ENCODE measurements at regions of chr16 and their contacts with region 1.

Region 1: GRCh38 chr16:71412270-71413160 is 29.3 kb downstream of the TLE7 start:
- DNase-seq: peak; percentile 46 to 60
- ATAC-seq: peak; percentile 50 to 78 (median 69)
- H3K4me3 ChIP-seq: no peak overlapping the region
- H3K27ac ChIP-seq: no peak overlapping the region
- H3K4me1 ChIP-seq: no peaks in the 10 kb centered on the region
- H3K27me3 ChIP-seq: peaks cover 0 to 7% (median 0%) of the 10 kb centered on the region in 3 donors
- CTCF ChIP-seq: peak; percentile 85

Region 2: DNA sequence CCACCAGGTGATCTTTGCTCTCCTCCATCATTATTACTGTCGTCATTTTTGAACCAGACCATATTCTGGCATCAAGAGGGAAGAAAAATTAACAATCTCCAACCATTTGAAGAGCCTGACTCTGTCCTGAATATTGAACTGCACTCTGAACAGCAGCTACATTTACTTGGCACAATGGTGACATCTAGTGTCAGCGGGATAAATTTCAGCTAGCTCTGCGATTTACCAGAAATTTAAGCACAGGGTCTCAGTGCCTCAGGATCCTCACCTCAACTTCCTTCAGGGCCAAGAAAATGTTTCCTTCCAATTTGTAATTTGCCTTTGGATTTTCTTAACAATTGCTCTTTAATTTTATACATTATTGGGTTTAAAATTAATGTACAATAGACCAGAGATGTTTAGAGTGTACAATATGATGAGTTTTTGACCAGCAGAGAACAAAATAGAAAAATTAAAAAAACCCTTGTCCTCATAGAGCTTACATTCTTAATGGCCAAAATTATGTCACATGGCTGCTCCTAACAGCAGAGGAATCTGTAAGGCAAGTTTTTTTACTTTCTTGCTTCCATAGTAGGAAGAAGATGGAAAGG is 87.4 kb after region 1 on chr16:
- intact Hi-C with region 1: loop called (anchors 2 kb)
- DNase-seq: no peak
- ATAC-seq: peak in 2 of 4 donors; percentile 56 to 67
- H3K4me3 ChIP-seq: no peak overlapping the region
- H3K27ac ChIP-seq: no peak overlapping the region
- H3K4me1 ChIP-seq: no peaks in the 10 kb centered on the region
- H3K27me3 ChIP-seq: peaks cover 0 to 2% (median 0%) of the 10 kb centered on the region in 3 donors
- CTCF ChIP-seq: peak; percentile 66

Region 3: DNA sequence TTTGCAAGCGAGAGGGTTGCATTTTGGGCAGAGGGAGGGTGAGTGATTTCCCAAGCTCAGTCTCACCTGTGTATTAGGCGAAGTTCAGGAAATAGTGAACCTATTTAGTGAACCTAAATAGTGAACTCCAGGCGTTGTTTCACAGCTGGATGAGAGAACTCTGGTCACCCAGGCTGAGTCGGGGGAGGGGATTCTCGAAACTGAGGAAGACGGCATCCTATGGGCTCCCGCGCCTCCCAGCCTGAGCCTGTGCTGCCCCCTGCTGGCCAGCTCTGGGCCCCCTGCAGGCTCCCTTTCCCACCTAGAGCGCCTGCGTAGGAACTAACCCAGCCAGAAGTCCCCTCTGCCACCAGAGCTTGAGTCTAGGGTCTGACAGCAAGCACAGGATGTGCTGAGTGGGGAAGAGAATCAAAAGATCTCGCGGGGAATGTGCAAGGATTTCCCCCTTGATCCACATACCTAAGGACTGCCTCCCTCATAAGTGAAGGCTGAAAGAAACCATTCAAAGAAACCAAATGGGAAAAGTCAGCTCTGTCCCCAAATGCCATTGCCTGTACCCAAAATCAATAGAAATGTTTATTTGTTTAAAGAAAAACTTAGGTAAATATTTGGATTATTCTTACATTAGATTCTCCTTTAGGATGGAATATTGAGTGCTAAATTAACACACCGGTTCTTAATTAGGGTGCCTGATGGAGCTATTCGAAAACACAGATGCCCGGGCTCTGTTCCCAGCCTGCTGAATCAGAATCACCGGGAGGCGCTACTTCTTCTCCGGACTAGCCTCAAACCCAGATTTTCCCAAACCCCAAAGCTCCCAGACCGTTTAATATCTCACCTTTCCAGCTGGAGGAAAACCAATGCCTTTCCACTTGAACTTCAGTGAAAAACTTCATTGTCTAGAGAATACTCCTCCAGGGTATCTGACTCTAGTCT is 198.7 kb after region 1 on chr16:
- intact Hi-C with region 1: loop called in 1 of 2 experiments (anchors 10 kb)
- DNase-seq: peak; percentile 50 to 68
- ATAC-seq: peak in 2 of 4 donors; percentile 55 to 67
- H3K4me3 ChIP-seq: no peak overlapping the region
- H3K27ac ChIP-seq: no peak overlapping the region
- H3K4me1 ChIP-seq: no peaks in the 10 kb centered on the region
- H3K27me3 ChIP-seq: peaks cover 0 to 24% (median 2%) of the 10 kb centered on the region in 3 donors
- CTCF ChIP-seq: peak; percentile 65